H1 (cell line): ENCODE measurements at regions of chr6 and their contacts with region 1.

Region 1: GRCh38 chr6:62265906-62266525 is 20.0 kb downstream of the KHDRBS2 start:
- DNase-seq: no peak
- H3K4me3 ChIP-seq: no peak overlapping the region
- H3K27ac ChIP-seq: no peak overlapping the region
- H3K4me1 ChIP-seq: peaks cover 0 to 4% (median 1%) of the 10 kb centered on the region in 4 experiments; a peak in 3 of 7 replicates
- H3K27me3 ChIP-seq: no peaks in the 10 kb centered on the region
- CTCF ChIP-seq: no peak
- EP300 ChIP-seq: no peak
- POLR2A ChIP-seq: no peak
- RAD21 ChIP-seq: no peak

Region 2: DNA sequence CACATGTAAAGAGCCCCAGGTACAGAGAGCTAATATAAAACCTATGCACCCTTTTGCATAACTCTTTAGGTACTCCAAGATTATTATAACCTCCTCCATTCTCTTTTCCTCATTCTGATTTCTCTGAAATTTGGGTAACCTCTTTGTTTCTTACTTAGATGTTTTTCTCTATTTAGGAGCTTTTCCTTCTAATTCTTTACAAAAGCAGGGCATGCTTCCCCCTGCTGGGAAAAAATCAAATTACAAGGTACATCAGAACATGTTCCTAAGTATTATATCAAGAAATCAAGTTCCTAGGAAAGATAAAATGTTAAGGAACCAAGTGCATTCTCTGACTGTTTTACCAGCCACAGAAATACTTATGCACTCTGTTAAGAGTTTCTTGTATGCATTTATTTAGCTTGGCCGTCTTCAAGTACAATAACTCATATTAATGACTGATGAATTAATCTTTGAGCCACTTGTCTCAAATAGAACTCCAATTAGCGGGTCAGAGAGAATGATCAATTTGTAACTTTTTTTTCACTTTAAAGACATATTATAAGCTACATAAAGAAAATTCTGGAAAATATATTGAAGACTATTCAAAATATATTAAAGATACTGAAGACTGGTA is 17.9 kb after region 1 on chr6:
- CTCF ChIA-PET with region 1: interaction called, 14 read pairs
- POLR2A ChIA-PET with region 1: no interaction called
- DNase-seq: no peak
- H3K4me3 ChIP-seq: peak overlapping the region in 2 of 4 experiments; percentile 3 to 93; a peak in 4 of 8 replicates
- H3K27ac ChIP-seq: no peak overlapping the region
- H3K4me1 ChIP-seq: peaks cover 0 to 5% (median 0%) of the 10 kb centered on the region in 4 experiments; a peak in 1 of 7 replicates
- H3K27me3 ChIP-seq: no peaks in the 10 kb centered on the region
- CTCF ChIP-seq: peak in 1 of 3 experiments; percentile 41; a peak in 2 of 4 replicates
- EP300 ChIP-seq: no peak
- POLR2A ChIP-seq: no peak
- RAD21 ChIP-seq: peak in 1 of 2 experiments; percentile 57

Region 3: GRCh38 chr6:62465206-62465605 is 199.2 kb after region 1 on chr6:
- CTCF ChIA-PET with region 1: no interaction called
- POLR2A ChIA-PET with region 1: no interaction called
- DNase-seq: no peak
- H3K4me3 ChIP-seq: no peak overlapping the region
- H3K27ac ChIP-seq: no peak overlapping the region
- H3K4me1 ChIP-seq: no peaks in the 10 kb centered on the region
- H3K27me3 ChIP-seq: no peaks in the 10 kb centered on the region
- CTCF ChIP-seq: no peak
- EP300 ChIP-seq: no peak
- POLR2A ChIP-seq: no peak
- RAD21 ChIP-seq: no peak